HCT116 (cell line): ENCODE measurements at regions of chr14 and their contacts with region 1.

Region 1: DNA sequence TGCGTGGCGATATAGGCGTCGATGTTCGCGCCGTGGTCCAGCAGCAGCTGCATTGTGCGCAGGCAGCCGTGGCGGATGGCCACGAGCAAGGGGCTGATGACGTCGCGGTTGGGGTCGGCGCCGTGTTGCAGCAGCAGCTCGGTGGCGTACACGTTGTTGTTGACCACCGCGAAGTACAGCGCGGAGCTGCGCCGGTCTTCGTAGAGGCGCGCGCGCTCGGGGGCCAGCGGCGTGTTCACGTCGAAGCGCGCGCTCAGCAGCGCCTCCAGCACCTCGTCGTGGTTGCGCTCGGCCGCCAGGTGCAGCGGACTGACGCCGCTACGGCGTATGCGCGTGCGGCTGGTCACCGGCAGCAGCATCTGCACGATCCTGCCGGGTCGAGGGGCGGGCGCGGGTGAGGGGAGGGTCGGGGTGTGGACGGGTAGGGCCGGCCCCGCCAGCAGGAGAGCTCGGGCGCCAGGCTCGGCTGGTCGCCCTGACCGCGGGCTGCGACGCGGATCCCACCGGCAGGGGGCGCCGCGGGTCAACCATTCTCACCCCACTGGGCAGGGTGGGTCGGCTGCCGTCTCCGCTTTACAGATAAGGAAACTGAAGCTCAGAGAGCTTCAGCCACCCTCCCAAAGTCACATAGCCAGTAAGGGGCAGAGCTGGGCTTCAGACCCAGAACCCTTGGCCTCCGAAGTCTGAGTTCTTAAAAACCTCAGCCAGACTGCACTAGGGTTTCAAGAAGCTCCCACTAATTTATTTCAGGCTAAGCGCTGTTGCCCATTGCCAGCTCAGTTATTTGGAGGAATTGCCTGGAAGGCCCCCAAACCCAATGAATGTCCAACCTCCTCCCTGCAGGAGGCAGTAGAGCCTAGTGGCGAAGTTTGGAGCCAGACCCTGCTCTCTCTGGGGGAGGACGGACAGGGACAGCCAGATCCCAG is 12.4 kb downstream of the FAM181A start:
- DNase-seq: peak; percentile 56
- ATAC-seq: peak; percentile 92
- H3K4me3 ChIP-seq: peak overlapping the region in 1 of 2 experiments; percentile 27; a peak in 2 of 4 replicates
- H3K27ac ChIP-seq: no peak overlapping the region
- H3K4me1 ChIP-seq: peaks cover 19 to 46% of the 10 kb centered on the region in 2 experiments
- H3K27me3 ChIP-seq: no peaks in the 10 kb centered on the region
- CTCF ChIP-seq: peak; percentile 52 to 95 (median 69)
- POLR2A ChIP-seq: no peak
- RAD21 ChIP-seq: peak; percentile 92

Region 2: GRCh38 chr14:93926873-93927799 is 12.4 kb before region 1 on chr14 and contains the start of gene FAM181A:
- CTCF ChIA-PET with region 1: interaction called, 18 read pairs
- POLR2A ChIA-PET with region 1: no interaction called
- RAD21 ChIA-PET with region 1: no interaction called
- intact Hi-C with region 1: no loop called
- DNase-seq: no peak
- ATAC-seq: no peak
- H3K4me3 ChIP-seq: no peak within 1 kb of the TSS
- H3K27ac ChIP-seq: no peak within 1 kb of the TSS
- H3K4me1 ChIP-seq: no peaks in the 10 kb centered on the region
- H3K27me3 ChIP-seq: no peaks in the 10 kb centered on the region
- CTCF ChIP-seq: no peak
- POLR2A ChIP-seq: no peak
- RAD21 ChIP-seq: no peak
- total RNA-seq, gene FAM181A: not detected

Region 3: DNA sequence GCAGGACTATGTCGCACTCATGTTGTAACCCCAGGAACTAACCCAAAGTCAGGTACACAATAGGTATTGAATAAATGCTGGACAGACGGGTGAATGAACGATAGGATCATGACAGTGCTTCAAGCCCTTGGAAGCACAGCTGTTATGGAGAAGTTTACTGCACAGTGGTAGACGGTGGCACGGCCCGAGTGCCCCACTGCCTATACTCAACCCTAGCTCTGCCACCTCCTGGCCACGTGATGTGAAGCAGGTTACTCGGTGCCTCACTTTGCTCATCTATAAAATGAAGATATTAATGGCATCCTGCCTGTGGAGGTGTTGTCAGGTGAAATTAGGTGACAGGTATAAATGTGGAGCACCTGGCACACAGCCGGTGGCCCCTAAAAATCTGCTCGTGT is 31.0 kb after region 1 on chr14:
- CTCF ChIA-PET with region 1: interaction called, 120 read pairs
- POLR2A ChIA-PET with region 1: interaction called, 4 read pairs
- RAD21 ChIA-PET with region 1: interaction called, 17 to 21 read pairs
- intact Hi-C with region 1: loop called (anchors 1 kb)
- DNase-seq: peak; percentile 33
- ATAC-seq: peak; percentile 98
- H3K4me3 ChIP-seq: no peak overlapping the region
- H3K27ac ChIP-seq: no peak overlapping the region
- H3K4me1 ChIP-seq: peaks cover 0 to 17% of the 10 kb centered on the region in 2 experiments; a peak in 2 of 4 replicates
- H3K27me3 ChIP-seq: no peaks in the 10 kb centered on the region
- CTCF ChIP-seq: peak; percentile 47 to 87 (median 63)
- POLR2A ChIP-seq: no peak
- RAD21 ChIP-seq: peak; percentile 90

Region 4: DNA sequence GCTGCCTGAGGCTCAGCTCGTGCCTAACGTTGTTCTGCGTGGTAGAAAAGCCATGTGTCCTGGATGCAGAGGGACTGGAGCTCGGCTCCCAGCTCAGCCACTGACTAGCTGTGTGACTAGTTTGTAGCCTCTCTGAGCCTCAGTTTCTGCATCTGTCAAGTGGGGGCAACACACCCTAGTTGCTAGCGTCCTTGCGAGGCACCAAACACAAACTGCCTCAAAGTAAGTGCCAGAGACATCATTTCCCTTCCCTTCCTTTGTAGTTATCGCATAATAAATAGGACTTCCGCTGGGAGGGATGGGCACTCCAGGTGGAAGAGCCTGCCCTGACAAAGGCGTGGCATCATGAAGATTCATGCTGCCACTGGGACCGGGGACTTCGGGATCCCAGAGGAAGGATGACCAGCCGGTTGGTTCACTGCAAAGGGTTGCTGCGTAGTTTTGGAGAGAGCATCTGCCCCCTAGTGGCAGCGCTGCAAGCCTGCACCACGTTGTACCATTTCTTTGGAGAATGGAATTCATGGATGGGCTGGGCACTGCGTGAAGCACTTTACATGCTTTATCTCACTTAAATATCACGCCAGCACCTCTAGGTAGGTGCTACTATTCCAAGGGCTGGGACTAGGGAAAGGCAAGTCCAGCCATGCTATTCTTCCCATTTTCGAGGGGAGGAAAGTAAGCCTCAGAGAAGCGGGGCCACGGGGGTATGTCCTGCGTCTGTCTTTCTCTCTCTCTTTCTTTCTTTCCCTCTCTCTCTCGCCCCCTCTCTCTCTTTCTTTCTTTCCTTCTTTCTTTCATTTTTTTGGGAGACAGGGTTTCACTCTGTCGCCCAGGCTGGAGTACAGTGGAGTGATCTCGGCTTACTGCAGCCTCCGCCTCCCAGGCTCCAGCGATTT is 62.2 kb after region 1 on chr14:
- CTCF ChIA-PET with region 1: interaction called, 121 read pairs
- POLR2A ChIA-PET with region 1: interaction called, 3 read pairs
- RAD21 ChIA-PET with region 1: interaction called, 7 to 11 read pairs
- intact Hi-C with region 1: loop called (anchors 1 kb)
- DNase-seq: peak; percentile 59
- ATAC-seq: peak; percentile 92
- H3K4me3 ChIP-seq: no peak overlapping the region
- H3K27ac ChIP-seq: no peak overlapping the region; the same call in 1 of the 2 replicates
- H3K4me1 ChIP-seq: peaks cover 0 to 19% of the 10 kb centered on the region in 2 experiments; a peak in 2 of 4 replicates
- H3K27me3 ChIP-seq: no peaks in the 10 kb centered on the region
- CTCF ChIP-seq: peak; percentile 94 to 97 (median 96)
- POLR2A ChIP-seq: no peak
- RAD21 ChIP-seq: peak; percentile 92

Region 5: DNA sequence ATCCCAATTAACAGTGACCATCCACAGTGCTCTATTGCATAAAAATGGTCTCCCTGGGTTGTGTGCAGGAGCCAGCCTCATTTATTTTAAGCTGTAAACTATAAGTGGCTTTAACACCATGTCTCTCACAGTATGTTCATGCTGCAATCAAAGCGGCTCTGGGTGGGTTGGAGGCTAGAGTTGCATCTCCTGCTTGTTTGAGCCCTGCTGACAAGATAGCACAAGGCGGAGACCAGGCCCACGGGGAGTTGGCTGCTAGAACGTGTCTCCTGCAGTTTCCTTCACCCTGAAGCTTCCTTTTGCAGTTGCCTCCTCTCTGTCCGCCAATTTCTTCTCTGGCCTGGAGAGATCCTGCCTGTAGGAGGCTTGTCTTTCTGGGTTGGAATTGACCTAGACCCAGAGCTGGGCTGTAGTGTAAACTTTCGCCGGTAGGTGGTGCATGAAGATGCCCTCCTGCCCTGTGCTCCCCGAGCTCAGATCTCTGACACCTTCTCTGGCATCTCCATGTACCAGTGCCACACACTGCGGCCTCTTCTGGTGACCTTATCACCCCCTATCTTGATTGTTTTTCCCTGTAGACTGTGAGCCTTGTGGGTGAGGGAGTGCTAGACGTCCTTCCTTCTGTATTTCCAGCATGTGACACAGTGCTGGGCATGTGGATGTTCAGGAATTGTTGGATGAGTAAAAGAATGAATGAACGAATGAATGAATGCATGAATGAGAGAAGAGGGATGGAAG is 96.9 kb after region 1 on chr14:
- CTCF ChIA-PET with region 1: interaction called, 11 read pairs
- POLR2A ChIA-PET with region 1: no interaction called
- RAD21 ChIA-PET with region 1: no interaction called
- intact Hi-C with region 1: no loop called
- DNase-seq: peak; percentile 64
- ATAC-seq: peak; percentile 99
- H3K4me3 ChIP-seq: no peak overlapping the region
- H3K27ac ChIP-seq: no peak overlapping the region
- H3K4me1 ChIP-seq: peaks cover 3 to 16% of the 10 kb centered on the region in 2 experiments; a peak in 3 of 4 replicates
- H3K27me3 ChIP-seq: no peaks in the 10 kb centered on the region
- CTCF ChIP-seq: peak; percentile 88 to 90 (median 90)
- POLR2A ChIP-seq: no peak
- RAD21 ChIP-seq: peak; percentile 72

Region 6: GRCh38 chr14:94136575-94137331 is 197.2 kb after region 1 on chr14:
- CTCF ChIA-PET with region 1: interaction called, 49 read pairs
- POLR2A ChIA-PET with region 1: interaction called, 4 read pairs
- RAD21 ChIA-PET with region 1: interaction called, 7 to 9 read pairs
- intact Hi-C with region 1: loop called (anchors 1 kb)
- DNase-seq: peak; percentile 78
- ATAC-seq: peak; percentile 95
- H3K4me3 ChIP-seq: peak overlapping the region in 1 of 2 experiments; percentile 30; a peak in 1 of 4 replicates
- H3K27ac ChIP-seq: no peak overlapping the region
- H3K4me1 ChIP-seq: peaks cover 0 to 3% of the 10 kb centered on the region in 2 experiments; a peak in 1 of 4 replicates
- H3K27me3 ChIP-seq: no peaks in the 10 kb centered on the region
- CTCF ChIP-seq: peak; percentile 92 to 96 (median 94)
- POLR2A ChIP-seq: no peak
- RAD21 ChIP-seq: peak; percentile 97